Right cardiac atrium (tissue), 5 donors: ENCODE measurements at regions of chr3 and their contacts with region 1.

Region 1: DNA sequence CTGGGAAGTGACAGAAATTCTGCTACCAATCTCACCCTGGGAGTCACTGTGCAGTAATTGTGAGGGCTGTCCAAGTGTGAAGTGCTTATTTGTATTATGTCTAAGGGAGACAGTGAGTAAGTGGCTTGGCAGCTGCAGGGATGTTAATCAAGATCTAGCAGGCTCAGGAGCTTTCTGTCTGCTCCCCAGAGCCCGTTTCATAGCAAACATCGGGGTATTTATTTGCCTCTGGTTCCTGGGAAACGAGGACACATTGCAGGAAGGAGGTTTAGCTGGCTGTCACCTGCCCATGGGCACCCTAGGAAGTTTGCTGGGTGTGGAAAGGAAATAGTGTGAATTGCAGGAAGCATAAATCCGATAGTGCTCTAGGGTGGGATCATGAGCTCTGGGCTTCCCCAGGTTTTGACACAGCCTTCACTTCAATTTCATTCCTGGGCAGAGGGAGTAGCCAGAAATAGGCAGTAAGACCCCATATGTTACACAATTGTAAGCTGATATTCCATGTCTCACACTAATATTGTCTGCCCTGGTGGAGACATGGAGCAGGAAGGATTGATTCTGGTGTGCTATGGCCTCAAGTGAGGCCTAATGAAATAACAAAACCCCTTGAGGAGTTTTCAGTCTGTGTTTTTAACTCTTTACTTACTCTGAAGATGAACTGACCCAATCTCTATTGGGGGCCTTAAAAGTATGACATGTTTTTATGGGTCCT is 74.1 kb upstream of the MITF start:
- DNase-seq: peak; percentile 35 to 60 (median 56)
- ATAC-seq: peak; percentile 91 to 96
- H3K4me3 ChIP-seq: no peak overlapping the region
- H3K27ac ChIP-seq: peak overlapping the region; percentile 25
- H3K4me1 ChIP-seq: no peaks in the 10 kb centered on the region
- H3K27me3 ChIP-seq: no peaks in the 10 kb centered on the region

Region 2: DNA sequence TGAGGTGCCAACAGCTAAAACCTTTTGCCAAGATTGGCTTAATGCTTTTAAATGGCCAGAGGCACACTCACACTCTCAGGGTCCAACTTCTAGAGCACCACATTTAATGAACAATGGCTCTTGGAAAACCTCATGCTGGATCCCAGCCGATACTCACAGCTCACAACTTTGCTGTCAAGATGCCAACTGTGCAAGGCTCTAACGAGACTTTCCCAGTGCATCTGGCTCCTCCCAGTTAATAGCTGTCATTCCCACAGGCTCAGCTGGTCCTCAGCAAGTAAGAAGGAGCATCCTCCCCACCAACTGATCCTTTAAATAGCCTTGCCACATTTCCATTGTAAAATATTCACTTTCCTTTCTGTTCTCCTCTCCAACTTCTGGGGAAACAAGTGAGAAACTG is 259.0 kb before region 1 on chr3:
- intact Hi-C with region 1: no loop called
- DNase-seq: peak; percentile 53 to 64 (median 61)
- ATAC-seq: peak; percentile 71 to 75
- H3K4me3 ChIP-seq: no peak overlapping the region
- H3K27ac ChIP-seq: no peak overlapping the region
- H3K4me1 ChIP-seq: no peaks in the 10 kb centered on the region
- H3K27me3 ChIP-seq: no peaks in the 10 kb centered on the region

Region 3: DNA sequence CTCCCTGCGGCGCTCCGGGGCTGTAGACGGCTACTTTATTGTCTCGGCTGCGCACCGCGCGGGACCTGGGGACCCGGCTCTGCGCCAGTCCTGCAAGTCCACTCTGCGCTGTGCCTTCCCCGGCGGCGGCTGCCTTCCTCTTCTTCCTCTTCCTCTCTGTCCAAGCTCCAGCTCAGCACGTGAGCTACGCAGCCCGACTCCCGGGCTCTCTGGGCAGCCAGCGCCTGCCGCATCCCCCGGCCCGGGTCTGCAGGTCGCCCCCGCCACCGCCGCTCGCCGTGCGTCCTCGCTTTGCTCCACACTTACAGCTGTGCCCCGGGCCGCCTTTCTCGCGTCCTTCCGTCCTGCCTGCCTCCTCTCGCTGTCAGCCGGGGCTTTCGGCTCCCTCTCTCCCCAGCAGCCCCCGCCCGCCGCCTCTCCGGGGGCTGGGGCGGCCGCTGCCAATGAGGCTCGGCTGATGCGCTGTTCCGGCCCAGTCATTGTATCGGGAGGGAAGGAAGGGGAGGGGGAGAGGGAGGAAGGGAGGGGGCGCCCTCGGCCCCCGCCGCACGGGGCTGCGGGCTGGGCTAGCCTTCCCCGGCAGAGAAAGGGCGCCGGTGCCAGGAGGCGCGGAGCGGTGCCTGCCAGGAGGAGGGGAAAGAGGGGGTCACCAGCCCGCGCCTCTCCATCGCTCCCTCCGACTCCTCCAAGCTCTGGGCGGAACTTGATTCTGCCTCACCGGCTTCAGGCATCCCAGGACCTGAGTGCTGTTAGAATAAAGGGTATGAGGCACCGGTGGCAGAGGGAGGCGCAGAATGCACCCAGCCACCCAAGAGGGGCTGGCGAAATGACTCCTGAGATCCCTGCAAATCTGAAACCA is 122.7 kb before region 1 on chr3:
- intact Hi-C with region 1: loop called (anchors 5 to 10 kb)
- DNase-seq: peak; percentile 51 to 80 (median 78)
- ATAC-seq: peak; percentile 70 to 79
- H3K4me3 ChIP-seq: peak overlapping the region; percentile 82
- H3K27ac ChIP-seq: peak overlapping the region; percentile 5
- H3K4me1 ChIP-seq: no peaks in the 10 kb centered on the region
- H3K27me3 ChIP-seq: no peaks in the 10 kb centered on the region

Region 4: DNA sequence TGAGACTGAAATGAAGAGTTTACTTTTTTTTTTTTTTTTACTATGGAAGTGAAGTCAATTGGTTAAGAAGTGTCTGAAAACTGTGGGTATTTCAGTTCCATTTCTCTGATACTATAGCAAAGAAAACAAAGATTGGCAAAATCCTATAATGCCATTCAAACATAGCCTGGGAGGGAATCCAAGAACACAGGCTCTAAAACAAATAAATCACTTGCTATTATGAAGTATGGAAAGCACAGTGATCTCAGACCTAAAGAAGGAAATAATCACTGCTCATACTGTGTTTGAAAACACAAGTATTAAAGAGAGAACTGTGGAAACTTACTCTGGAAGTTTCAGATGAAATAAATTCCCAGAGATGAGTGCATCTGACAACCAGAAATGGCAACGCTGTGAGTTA is 346.4 kb after region 1 on chr3:
- intact Hi-C with region 1: no loop called
- DNase-seq: no peak
- ATAC-seq: no peak
- H3K4me3 ChIP-seq: no peak overlapping the region
- H3K27ac ChIP-seq: no peak overlapping the region
- H3K4me1 ChIP-seq: no peaks in the 10 kb centered on the region
- H3K27me3 ChIP-seq: no peaks in the 10 kb centered on the region